Aorta (tissue), 5 donors: ENCODE measurements at regions of chr6 and their contacts with region 1.

Region 1: DNA sequence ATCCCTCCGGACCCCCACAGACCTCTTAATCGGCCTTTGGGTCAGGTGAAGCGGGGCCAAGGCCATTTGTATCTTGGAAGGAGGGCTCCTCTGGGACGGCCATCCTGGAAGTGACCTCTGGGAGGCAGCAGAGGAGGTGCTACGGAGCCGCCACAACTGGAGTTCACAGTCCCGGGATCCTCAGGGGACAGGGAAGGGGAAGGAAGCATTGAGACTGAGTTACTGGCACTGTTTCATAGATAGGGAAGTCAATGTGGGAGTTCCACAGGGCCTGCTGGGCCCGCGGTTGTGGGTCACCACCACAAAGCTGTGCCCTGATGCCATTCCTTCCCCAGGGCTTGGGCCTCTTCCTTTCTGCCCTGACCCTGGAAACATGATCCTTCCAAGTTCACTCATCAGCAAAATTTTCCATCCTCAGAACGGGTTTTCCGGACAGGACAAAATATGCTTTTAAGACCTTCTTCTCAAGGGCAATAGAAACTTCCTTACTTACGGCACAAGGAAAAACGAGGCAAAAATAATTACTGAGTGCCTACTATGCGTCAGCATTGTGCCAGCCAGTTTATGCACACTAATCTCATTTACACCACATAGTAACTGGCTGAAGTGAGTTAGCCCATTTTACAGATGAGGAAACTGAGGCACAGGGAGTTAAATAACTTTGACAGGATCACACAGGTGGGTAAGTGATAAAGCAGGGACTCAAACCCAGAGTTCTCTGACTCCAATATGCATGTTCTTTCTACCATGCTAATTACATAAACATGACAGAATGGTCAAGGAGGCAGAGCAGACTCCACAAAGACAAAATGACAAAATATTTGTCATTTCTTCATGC is 143.8 kb downstream of the UNC5CL start:
- DNase-seq: peak in 1 of 2 donors; percentile 53
- ATAC-seq: peak; percentile 72
- H3K4me3 ChIP-seq: no peak overlapping the region
- H3K27ac ChIP-seq: no peak overlapping the region
- H3K4me1 ChIP-seq: peaks cover 0 to 4% of the 10 kb centered on the region in 2 donors
- H3K27me3 ChIP-seq: no peaks in the 10 kb centered on the region

Region 2: DNA sequence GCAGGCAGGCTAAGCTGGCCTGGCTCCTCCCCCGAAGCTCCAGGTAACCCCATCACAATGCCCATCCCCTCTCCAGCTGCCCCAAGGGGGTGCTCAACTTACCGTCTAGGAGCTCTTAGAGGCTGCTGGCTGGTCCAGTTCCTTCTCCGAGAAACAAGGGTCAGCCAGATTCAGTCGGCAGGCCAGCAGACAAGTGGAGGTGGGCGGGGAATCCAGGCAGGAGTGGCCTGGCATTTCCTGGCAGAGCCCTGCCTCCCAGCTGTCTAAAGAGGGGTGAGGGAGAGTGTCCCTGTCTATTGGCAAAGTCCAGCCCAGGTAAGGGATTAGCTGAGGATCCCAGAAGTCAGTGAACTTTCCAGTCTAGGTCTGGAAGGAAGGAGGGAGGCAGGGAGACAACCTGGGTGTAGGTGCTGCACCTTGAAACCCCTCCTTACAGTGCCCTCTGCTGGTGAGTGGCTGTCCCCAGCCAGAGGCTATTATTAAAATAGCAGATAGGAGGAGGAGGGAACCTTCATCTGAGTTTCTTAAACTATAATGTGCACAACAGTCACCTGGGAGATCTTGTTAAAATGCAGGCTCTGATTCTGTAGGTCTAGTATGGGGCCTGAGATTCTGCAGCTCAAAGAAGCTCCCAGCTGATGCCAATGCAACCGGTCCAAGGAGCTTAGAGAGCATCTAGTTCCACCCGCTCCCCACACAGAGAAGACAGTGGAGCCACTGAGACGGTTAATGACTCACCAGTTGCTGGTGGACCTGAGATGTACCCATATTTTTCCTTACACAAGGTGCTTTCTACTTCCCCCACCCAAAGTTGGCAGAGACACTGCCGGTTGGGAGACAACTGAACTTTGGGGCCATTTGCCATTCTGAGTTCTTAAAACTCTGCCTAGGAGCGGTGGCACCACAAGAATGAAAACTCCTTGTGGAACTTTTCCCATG is 144.1 kb after region 1 on chr6 and contains the start of gene UNC5CL:
- intact Hi-C with region 1: loop called in 1 of 2 experiments (anchors 10 kb)
- DNase-seq: peak in 1 of 2 donors; percentile 52
- ATAC-seq: no peak
- H3K4me3 ChIP-seq: no peak within 1 kb of the TSS
- H3K27ac ChIP-seq: no peak within 1 kb of the TSS
- H3K4me1 ChIP-seq: no peaks in the 10 kb centered on the region
- H3K27me3 ChIP-seq: no peaks in the 10 kb centered on the region
- total RNA-seq, gene UNC5CL: 0.75 to 1.4 TPM

Region 3: GRCh38 chr6:41545703-41546474 is 650.7 kb after region 1 on chr6 and contains the start of gene FOXP4:
- intact Hi-C with region 1: no loop called
- DNase-seq: peak; percentile 95
- ATAC-seq: peak; percentile 91
- H3K4me3 ChIP-seq: peak within 1 kb of the TSS; percentile 93 to 96
- H3K27ac ChIP-seq: peak within 1 kb of the TSS; percentile 73 to 94
- H3K4me1 ChIP-seq: peaks cover 0 to 3% of the 10 kb centered on the region in 2 donors
- H3K27me3 ChIP-seq: no peaks in the 10 kb centered on the region
- total RNA-seq, gene FOXP4: 31.6 to 36.2 TPM